ENCODE measurements at regions of chr17 and their contacts with region 1.

Region 1: GRCh38 chr17:68196944-68197595 is 50.8 kb upstream of the AMZ2 start:
- DNase-seq: peak in 1 of 2 experiments; percentile 75
- H3K4me3 ChIP-seq: peak overlapping the region; percentile 25 to 61 (median 42)
- H3K27ac ChIP-seq: no peak overlapping the region
- H3K4me1 ChIP-seq: peaks cover 8 to 28% (median 15%) of the 10 kb centered on the region in 4 experiments
- H3K27me3 ChIP-seq: peaks cover 53 to 77% (median 66%) of the 10 kb centered on the region in 4 experiments
- CTCF ChIP-seq: no peak
- EP300 ChIP-seq: no peak
- POLR2A ChIP-seq: no peak
- RAD21 ChIP-seq: no peak

Region 2: DNA sequence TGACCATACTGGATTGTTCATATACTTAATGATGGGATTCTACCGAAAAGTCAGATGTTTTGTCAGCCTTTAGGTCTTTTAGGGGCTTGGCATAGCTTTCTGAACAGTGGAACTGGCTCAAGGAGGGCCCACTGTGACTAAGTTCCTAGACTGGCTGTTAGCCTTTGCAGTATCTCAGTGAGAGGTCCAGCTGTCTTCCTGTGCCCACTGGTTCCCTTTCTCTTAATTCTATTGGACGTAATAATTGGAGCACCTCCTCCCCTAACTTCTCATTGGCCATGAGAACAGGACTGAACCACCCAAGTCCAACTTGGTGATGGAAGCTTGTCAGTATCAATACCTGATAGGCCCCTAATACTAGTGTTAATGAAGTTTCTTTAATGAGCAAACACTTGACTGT is 148.1 kb before region 1 on chr17:
- CTCF ChIA-PET with region 1: interaction called, 3 read pairs
- POLR2A ChIA-PET with region 1: interaction called, 10 read pairs
- DNase-seq: no peak
- H3K4me3 ChIP-seq: no peak overlapping the region
- H3K27ac ChIP-seq: no peak overlapping the region
- H3K4me1 ChIP-seq: no peaks in the 10 kb centered on the region
- H3K27me3 ChIP-seq: no peaks in the 10 kb centered on the region
- CTCF ChIP-seq: no peak
- EP300 ChIP-seq: no peak
- POLR2A ChIP-seq: no peak
- RAD21 ChIP-seq: no peak

Region 3: DNA sequence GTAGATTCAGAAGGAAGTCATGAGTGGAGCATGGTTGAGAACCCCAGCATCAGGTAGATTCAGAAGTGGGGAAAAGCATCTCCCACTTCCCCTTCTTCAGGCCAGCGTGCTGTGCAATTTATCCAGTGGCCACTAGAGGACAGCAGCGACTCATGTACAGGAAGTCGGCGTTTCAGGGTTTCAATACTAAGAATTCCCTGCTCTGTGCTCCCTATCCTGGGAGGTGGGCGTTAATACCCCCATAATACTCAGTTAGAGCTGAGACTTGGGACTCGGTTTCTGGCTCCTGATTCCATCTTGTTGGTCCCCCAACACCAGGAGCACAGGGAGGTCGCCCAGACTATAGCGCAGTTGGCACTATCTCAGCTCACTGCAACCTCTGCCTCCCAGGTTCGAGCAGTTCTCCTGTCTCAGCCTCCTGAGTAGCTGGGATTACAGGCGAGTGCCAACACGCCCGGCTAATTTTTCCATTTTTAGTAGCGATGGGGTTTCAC is 24.6 kb before region 1 on chr17:
- CTCF ChIA-PET with region 1: interaction called, 73 read pairs
- POLR2A ChIA-PET with region 1: interaction called, 7 read pairs
- DNase-seq: peak in 1 of 2 experiments; percentile 87
- H3K4me3 ChIP-seq: no peak overlapping the region
- H3K27ac ChIP-seq: no peak overlapping the region
- H3K4me1 ChIP-seq: no peaks in the 10 kb centered on the region
- H3K27me3 ChIP-seq: no peaks in the 10 kb centered on the region
- CTCF ChIP-seq: peak; percentile 80 to 90 (median 86)
- EP300 ChIP-seq: no peak
- POLR2A ChIP-seq: no peak
- RAD21 ChIP-seq: peak; percentile 91 to 93

Region 4: GRCh38 chr17:68184816-68185436 is 12.1 kb before region 1 on chr17:
- CTCF ChIA-PET with region 1: interaction called, 63 read pairs
- POLR2A ChIA-PET with region 1: interaction called, 6 read pairs
- DNase-seq: no peak
- H3K4me3 ChIP-seq: no peak overlapping the region
- H3K27ac ChIP-seq: no peak overlapping the region
- H3K4me1 ChIP-seq: peaks cover 0 to 4% (median 2%) of the 10 kb centered on the region in 4 experiments; a peak in 3 of 7 replicates
- H3K27me3 ChIP-seq: no peaks in the 10 kb centered on the region
- CTCF ChIP-seq: no peak
- EP300 ChIP-seq: no peak
- POLR2A ChIP-seq: no peak
- RAD21 ChIP-seq: no peak

Region 5: DNA sequence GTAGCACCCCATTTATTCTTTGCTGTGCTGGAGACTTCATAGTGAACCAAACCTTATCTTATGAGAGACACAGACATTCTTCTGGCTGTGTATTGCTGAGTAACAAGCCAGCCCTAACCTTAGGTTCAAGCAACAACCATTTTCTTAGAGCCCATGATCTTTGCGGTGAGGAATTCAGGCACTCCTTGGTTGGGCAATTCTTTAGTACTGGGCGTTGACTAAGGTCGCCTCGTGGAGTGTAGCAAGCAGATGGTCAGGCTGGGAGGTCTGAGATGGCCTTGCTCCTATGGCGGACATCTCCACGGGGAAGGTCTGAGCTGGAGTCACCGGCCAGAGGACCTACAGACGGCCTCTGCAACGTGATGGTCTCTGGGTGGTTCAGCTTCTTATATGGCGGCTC is 137.3 kb after region 1 on chr17:
- CTCF ChIA-PET with region 1: no interaction called
- POLR2A ChIA-PET with region 1: no interaction called
- DNase-seq: no peak
- H3K4me3 ChIP-seq: no peak overlapping the region
- H3K27ac ChIP-seq: no peak overlapping the region
- H3K4me1 ChIP-seq: no peaks in the 10 kb centered on the region
- H3K27me3 ChIP-seq: no peaks in the 10 kb centered on the region
- CTCF ChIP-seq: no peak
- EP300 ChIP-seq: no peak
- POLR2A ChIP-seq: no peak
- RAD21 ChIP-seq: no peak

Measured in H1 (cell line).